GM12878 (cell line): ENCODE measurements at regions of chr3 and their contacts with region 1.

Region 1: GRCh38 chr3:12984023-12984823 is 89.0 kb downstream of the IQSEC1 start:
- DNase-seq: no peak
- ATAC-seq: peak; percentile 90
- H3K4me3 ChIP-seq: no peak overlapping the region
- H3K27ac ChIP-seq: no peak overlapping the region
- H3K4me1 ChIP-seq: peaks cover 32% of the 10 kb centered on the region
- H3K27me3 ChIP-seq: no peaks in the 10 kb centered on the region
- CTCF ChIP-seq: peak; percentile 64 to 79 (median 69)
- EP300 ChIP-seq: no peak
- POLR2A ChIP-seq: no peak
- RAD21 ChIP-seq: peak; percentile 72

Region 2: DNA sequence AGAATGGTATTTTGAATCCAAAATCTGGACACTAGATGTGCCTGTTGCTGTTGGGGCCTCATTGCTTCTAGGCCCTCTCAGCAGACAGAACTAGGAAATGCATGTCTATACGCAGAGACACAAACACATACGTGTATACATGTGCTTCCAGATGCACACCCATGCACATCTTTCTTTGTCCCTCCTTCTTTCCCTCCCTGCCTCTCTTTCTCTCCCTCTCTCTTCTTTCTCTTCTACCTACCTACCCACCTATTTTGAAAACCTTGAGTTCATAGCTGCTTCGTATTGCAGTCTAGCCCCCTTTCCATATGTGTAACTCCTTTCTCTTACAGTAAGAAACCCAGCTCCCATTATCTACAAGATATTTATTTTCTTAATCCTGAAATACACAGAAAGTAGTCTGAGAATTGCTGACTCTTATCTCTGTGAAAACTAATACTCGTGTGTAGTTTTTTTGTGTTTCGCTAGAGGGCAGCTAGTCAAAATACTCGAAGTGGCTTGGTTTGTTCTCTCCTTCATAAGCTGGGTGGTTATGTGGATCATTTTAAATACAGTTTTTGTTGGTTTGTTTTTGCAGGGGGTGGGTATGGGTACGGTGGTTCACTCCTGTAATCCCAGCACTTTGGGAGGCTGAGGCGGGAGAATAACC is 161.4 kb before region 1 on chr3:
- CTCF ChIA-PET with region 1: no interaction called
- POLR2A ChIA-PET with region 1: no interaction called
- RAD21 ChIA-PET with region 1: no interaction called
- SMC1A ChIA-PET with region 1: no interaction called
- in situ Hi-C with region 1: no loop called
- intact Hi-C with region 1: no loop called
- DNase-seq: no peak
- ATAC-seq: peak; percentile 85
- H3K4me3 ChIP-seq: no peak overlapping the region
- H3K27ac ChIP-seq: no peak overlapping the region
- H3K4me1 ChIP-seq: no peaks in the 10 kb centered on the region
- H3K27me3 ChIP-seq: no peaks in the 10 kb centered on the region
- CTCF ChIP-seq: peak; percentile 39 to 46 (median 46); a peak in 5 of 6 replicates
- EP300 ChIP-seq: no peak
- POLR2A ChIP-seq: no peak
- RAD21 ChIP-seq: 0 out of 2 replicates have a peak, but pooled peaks have one; percentile 6

Region 3: GRCh38 chr3:12868039-12869034 is 115.9 kb before region 1 on chr3:
- CTCF ChIA-PET with region 1: interaction called, 4 read pairs
- POLR2A ChIA-PET with region 1: no interaction called
- RAD21 ChIA-PET with region 1: no interaction called
- SMC1A ChIA-PET with region 1: no interaction called
- in situ Hi-C with region 1: no loop called
- intact Hi-C with region 1: loop called (anchors 10 kb)
- DNase-seq: no peak
- ATAC-seq: peak; percentile 82
- H3K4me3 ChIP-seq: no peak overlapping the region
- H3K27ac ChIP-seq: no peak overlapping the region
- H3K4me1 ChIP-seq: peaks cover 28% of the 10 kb centered on the region
- H3K27me3 ChIP-seq: no peaks in the 10 kb centered on the region; a peak in 1 of 4 replicates
- CTCF ChIP-seq: peak; percentile 86 to 94 (median 90)
- EP300 ChIP-seq: no peak
- POLR2A ChIP-seq: no peak
- RAD21 ChIP-seq: peak; percentile 85

Region 4: GRCh38 chr3:12948891-12949711 is 35.1 kb before region 1 on chr3:
- CTCF ChIA-PET with region 1: interaction called, 18 read pairs
- POLR2A ChIA-PET with region 1: no interaction called
- RAD21 ChIA-PET with region 1: no interaction called
- SMC1A ChIA-PET with region 1: no interaction called
- in situ Hi-C with region 1: no loop called
- intact Hi-C with region 1: no loop called
- DNase-seq: no peak
- ATAC-seq: peak; percentile 89
- H3K4me3 ChIP-seq: no peak overlapping the region
- H3K27ac ChIP-seq: no peak overlapping the region
- H3K4me1 ChIP-seq: peaks cover 15% of the 10 kb centered on the region
- H3K27me3 ChIP-seq: no peaks in the 10 kb centered on the region
- CTCF ChIP-seq: peak in 2 of 3 experiments; percentile 15 to 25; a peak in 2 of 6 replicates
- EP300 ChIP-seq: no peak
- POLR2A ChIP-seq: no peak
- RAD21 ChIP-seq: no peak

Region 5: GRCh38 chr3:12967606-12968351 is 16.4 kb before region 1 on chr3:
- CTCF ChIA-PET with region 1: interaction called, 22 read pairs
- POLR2A ChIA-PET with region 1: no interaction called
- RAD21 ChIA-PET with region 1: interaction called, 5 read pairs
- SMC1A ChIA-PET with region 1: no interaction called
- in situ Hi-C with region 1: no loop called
- intact Hi-C with region 1: no loop called
- DNase-seq: no peak
- ATAC-seq: peak; percentile 97
- H3K4me3 ChIP-seq: peak overlapping the region; percentile 65
- H3K27ac ChIP-seq: no peak overlapping the region
- H3K4me1 ChIP-seq: peaks cover 35% of the 10 kb centered on the region
- H3K27me3 ChIP-seq: no peaks in the 10 kb centered on the region
- CTCF ChIP-seq: no peak
- EP300 ChIP-seq: no peak
- POLR2A ChIP-seq: no peak; the same call in 1 of the 2 replicates
- RAD21 ChIP-seq: no peak

Region 6: DNA sequence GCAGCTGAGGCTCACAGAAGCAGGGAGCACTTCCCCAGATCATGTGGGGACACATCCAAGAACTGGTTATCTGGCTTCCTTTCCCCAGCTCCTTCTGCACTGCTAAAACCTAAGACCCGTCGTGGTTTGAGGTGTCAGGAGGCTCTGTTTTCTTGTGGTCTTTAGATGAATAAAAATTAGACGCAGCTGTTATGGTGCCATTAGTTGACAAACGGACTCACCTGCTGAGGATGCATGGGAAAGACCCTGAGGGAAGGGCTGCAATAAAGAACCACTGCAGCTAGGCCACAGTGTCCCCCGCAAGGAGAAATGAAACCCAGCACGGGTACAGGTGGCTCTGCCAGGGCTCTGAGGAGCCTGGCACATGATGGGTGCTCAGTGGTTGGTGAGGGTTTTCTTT is 10.4 kb before region 1 on chr3:
- CTCF ChIA-PET with region 1: interaction called, 22 read pairs
- POLR2A ChIA-PET with region 1: interaction called, 3 read pairs
- RAD21 ChIA-PET with region 1: interaction called, 4 read pairs
- SMC1A ChIA-PET with region 1: interaction called, 7 read pairs
- in situ Hi-C with region 1: no loop called
- intact Hi-C with region 1: no loop called
- DNase-seq: no peak
- ATAC-seq: peak; percentile 75
- H3K4me3 ChIP-seq: no peak overlapping the region
- H3K27ac ChIP-seq: no peak overlapping the region
- H3K4me1 ChIP-seq: peaks cover 10% of the 10 kb centered on the region
- H3K27me3 ChIP-seq: no peaks in the 10 kb centered on the region
- CTCF ChIP-seq: no peak
- EP300 ChIP-seq: no peak
- POLR2A ChIP-seq: no peak
- RAD21 ChIP-seq: no peak

Region 7: GRCh38 chr3:12994607-12995388 is 10.6 kb after region 1 on chr3:
- CTCF ChIA-PET with region 1: interaction called, 44 read pairs
- POLR2A ChIA-PET with region 1: interaction called, 5 read pairs
- RAD21 ChIA-PET with region 1: interaction called, 6 read pairs
- SMC1A ChIA-PET with region 1: interaction called, 5 read pairs
- in situ Hi-C with region 1: no loop called
- intact Hi-C with region 1: no loop called
- DNase-seq: no peak
- ATAC-seq: peak; percentile 90
- H3K4me3 ChIP-seq: peak overlapping the region; percentile 89
- H3K27ac ChIP-seq: peak overlapping the region; percentile 79
- H3K4me1 ChIP-seq: peaks cover 34% of the 10 kb centered on the region
- H3K27me3 ChIP-seq: no peaks in the 10 kb centered on the region
- CTCF ChIP-seq: peak; percentile 87 to 90 (median 90)
- EP300 ChIP-seq: no peak
- POLR2A ChIP-seq: peak; percentile 75
- RAD21 ChIP-seq: peak; percentile 61